Caco-2 (cell line): ENCODE measurements at regions of chr2 and their contacts with region 1.

Region 1: DNA sequence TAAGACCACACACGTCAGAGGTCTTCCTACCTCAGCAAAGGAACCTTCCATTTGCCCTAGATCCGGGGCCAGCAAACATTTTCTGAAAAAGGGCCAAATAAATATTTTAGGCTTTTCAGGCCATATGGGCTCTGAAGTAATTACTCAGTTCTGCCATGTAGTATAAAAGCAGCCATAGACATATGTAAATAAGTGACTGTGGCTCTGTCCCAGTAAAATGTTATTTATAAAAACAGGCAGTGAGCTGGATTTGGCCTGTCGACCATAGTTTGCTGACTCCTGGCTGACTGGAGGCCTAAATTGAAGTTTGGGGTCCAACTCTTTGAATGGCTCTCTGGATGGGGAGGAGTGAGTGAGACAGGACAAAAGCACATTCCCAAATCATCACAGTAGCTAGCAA is 49.5 kb downstream of the ABCB11 start:
- DNase-seq: no peak
- H3K4me3 ChIP-seq: no peak overlapping the region
- H3K4me3 Mint-ChIP-seq: no peak overlapping the region
- H3K27ac Mint-ChIP-seq: no peak overlapping the region
- H3K4me1 ChIP-seq: no peaks in the 10 kb centered on the region
- H3K4me1 Mint-ChIP-seq: no peaks in the 10 kb centered on the region
- H3K27me3 ChIP-seq: no peaks in the 10 kb centered on the region
- H3K27me3 Mint-ChIP-seq: peaks cover 10% of the 10 kb centered on the region
- CTCF ChIP-seq: no peak

Region 2: DNA sequence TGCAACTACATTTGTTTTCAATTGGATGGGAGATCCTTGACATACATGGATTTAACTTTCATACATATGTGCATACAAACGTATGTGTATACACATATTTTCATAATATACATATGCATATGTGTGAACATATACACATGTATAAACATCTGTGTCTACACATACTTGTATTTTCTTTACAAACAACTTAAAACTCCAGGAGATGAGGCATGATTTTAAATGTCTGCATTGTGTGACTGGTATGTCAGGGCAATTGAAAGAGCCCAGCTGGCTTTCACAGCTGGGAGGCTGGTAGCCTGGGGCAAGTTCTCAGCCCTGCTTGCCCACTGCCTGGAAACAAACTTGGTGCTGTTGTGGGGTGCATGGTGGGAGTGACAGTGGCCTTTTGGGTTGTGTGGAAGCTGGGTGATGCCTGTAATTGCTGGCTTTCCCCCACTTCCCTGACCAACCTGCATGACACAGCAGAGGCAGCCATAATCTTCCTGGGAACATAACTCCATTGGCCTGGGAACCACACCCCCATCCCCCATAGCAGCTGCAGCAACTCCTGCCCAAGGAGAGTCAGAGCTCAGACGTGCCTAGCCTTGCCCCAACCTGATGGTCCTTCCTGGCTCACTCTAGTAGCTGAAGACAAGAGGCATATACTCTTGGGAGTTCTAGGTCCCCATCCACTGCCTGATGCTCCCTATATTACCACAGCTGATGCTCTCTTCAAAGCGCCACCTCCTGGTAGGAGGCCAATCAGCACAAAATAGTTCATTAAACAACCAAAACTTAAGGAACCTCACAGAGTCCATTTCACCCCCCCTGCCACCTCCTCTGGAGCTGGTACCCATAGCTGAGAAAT is 367.3 kb before region 1 on chr2:
- CTCF ChIA-PET with region 1: no interaction called
- POLR2A ChIA-PET with region 1: no interaction called
- intact Hi-C with region 1: no loop called
- DNase-seq: no peak
- H3K4me3 ChIP-seq: no peak overlapping the region
- H3K4me3 Mint-ChIP-seq: no peak overlapping the region
- H3K27ac Mint-ChIP-seq: no peak overlapping the region
- H3K4me1 ChIP-seq: no peaks in the 10 kb centered on the region
- H3K4me1 Mint-ChIP-seq: peaks cover 10% of the 10 kb centered on the region
- H3K27me3 ChIP-seq: no peaks in the 10 kb centered on the region
- H3K27me3 Mint-ChIP-seq: no peaks in the 10 kb centered on the region
- CTCF ChIP-seq: peak; percentile 7 to 14

Region 3: GRCh38 chr2:168920504-168921157 is 61.0 kb before region 1 on chr2:
- CTCF ChIA-PET with region 1: no interaction called
- POLR2A ChIA-PET with region 1: no interaction called
- intact Hi-C with region 1: no loop called
- DNase-seq: peak in 1 of 2 experiments; percentile 45
- H3K4me3 ChIP-seq: no peak overlapping the region
- H3K4me3 Mint-ChIP-seq: no peak overlapping the region
- H3K27ac Mint-ChIP-seq: no peak overlapping the region
- H3K4me1 ChIP-seq: no peaks in the 10 kb centered on the region
- H3K4me1 Mint-ChIP-seq: no peaks in the 10 kb centered on the region
- H3K27me3 ChIP-seq: peaks cover 2% of the 10 kb centered on the region; the same call in 1 of the 2 replicates
- H3K27me3 Mint-ChIP-seq: peaks cover 24% of the 10 kb centered on the region
- CTCF ChIP-seq: peak; percentile 42 to 51

Region 4: GRCh38 chr2:169095621-169096105 is 114.0 kb after region 1 on chr2:
- CTCF ChIA-PET with region 1: no interaction called
- POLR2A ChIA-PET with region 1: no interaction called
- intact Hi-C with region 1: loop called (anchors 5 kb)
- DNase-seq: no peak
- H3K4me3 ChIP-seq: no peak overlapping the region
- H3K4me3 Mint-ChIP-seq: no peak overlapping the region
- H3K27ac Mint-ChIP-seq: no peak overlapping the region
- H3K4me1 ChIP-seq: no peaks in the 10 kb centered on the region
- H3K4me1 Mint-ChIP-seq: no peaks in the 10 kb centered on the region
- H3K27me3 ChIP-seq: no peaks in the 10 kb centered on the region
- H3K27me3 Mint-ChIP-seq: peaks cover 15% of the 10 kb centered on the region
- CTCF ChIP-seq: no peak